Lower leg skin (tissue), 4 donors: ENCODE measurements at regions of chr1 and their contacts with region 1.

Region 1: DNA sequence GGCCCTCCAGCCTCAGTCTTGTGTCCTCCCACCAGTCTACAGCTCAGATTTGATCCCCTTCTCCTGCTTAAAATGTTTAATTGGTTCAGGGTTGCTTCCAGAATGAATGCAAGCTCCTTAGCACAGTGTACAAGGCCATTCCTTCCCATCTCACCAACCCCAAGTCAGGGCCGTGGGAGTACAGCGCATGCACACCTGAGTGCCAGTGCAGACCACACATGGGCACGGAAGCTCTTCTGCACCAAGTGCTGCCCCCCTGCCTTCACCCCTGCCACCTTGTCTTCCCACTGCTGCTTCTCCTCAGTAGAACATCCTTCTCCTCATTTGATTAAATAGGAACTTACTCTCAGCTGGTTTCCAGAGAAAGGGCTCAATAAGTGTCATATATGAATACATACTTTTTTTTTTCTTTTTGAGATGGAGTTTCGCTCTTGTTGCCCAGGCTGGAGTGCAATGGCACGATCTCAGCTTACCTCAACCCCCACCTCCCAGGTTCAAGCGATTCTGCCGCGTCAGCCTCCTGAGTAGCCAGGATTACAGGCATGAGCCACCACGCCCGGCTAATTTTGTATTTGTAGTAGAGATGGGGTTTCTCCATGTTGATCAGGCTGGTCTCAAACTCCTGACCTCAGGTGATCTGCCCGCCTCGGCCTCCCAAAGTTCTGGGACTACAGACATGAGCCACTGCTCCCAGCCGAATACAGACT is 9.3 kb downstream of the PMF1 start:
- DNase-seq: no peak
- H3K4me3 ChIP-seq: no peak overlapping the region
- CTCF ChIP-seq: no peak
- POLR2A ChIP-seq: no peak

Region 2: DNA sequence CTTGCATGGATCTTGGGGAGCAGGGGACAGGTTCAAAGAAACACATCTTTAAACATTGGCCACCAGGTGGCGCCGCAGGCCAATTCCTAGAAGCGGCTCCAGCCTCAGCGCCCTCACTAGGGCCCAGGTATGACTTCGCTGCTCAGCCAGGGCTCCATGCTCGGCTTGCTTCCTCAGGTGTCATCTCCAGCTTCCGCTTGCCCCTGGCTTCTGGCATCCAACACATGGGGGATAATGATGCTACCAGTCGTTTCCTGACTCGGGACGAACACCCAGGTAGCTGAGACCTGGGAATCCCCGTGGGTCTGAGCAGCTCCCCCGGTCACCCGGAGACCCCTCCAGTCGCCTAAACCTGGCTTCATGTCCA is 131.3 kb before region 1 on chr1:
- intact Hi-C with region 1: loop called (anchors 5 kb)
- DNase-seq: peak; percentile 71 to 97
- H3K4me3 ChIP-seq: no peak overlapping the region
- CTCF ChIP-seq: peak in 1 of 3 donors; percentile 59
- POLR2A ChIP-seq: no peak

Region 3: DNA sequence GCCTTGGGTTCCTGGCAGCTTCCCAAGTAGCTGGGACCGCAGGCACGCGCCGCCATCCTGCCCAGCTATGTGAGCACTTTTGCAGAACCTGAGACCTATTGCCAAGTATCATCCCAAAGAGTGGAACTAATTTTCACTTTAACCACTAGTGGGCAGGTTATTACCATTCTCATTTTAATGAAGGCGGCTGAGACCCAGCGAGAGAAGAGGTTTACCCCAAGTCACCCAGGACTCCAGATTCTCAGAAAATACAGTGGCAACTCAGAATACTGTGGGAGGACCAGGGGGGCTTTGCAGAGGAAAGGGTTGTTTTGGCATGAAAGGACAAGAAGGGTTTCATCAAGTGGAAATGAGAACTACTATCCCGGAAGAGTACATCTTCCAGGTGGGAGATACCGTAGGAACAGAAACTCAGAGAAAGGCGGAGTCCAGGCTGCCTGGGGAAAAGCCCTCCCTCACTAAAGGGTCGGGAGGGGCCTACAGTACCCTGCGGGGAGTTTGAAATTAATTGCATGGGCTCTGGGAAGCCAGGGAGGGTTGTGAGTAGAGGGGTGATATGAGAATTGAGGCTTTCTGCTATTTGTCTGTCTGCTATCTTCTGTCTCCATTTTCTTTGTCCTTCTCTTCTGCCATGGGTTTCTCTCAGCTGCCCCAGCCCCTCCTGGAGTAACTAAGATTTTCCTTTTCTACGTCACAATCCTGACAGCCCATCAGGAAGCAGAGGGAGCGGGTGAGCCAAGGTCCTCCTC is 75.9 kb before region 1 on chr1:
- intact Hi-C with region 1: loop called (anchors 5 kb)
- DNase-seq: peak; percentile 67 to 95
- H3K4me3 ChIP-seq: no peak overlapping the region
- CTCF ChIP-seq: no peak
- POLR2A ChIP-seq: no peak

Region 4: DNA sequence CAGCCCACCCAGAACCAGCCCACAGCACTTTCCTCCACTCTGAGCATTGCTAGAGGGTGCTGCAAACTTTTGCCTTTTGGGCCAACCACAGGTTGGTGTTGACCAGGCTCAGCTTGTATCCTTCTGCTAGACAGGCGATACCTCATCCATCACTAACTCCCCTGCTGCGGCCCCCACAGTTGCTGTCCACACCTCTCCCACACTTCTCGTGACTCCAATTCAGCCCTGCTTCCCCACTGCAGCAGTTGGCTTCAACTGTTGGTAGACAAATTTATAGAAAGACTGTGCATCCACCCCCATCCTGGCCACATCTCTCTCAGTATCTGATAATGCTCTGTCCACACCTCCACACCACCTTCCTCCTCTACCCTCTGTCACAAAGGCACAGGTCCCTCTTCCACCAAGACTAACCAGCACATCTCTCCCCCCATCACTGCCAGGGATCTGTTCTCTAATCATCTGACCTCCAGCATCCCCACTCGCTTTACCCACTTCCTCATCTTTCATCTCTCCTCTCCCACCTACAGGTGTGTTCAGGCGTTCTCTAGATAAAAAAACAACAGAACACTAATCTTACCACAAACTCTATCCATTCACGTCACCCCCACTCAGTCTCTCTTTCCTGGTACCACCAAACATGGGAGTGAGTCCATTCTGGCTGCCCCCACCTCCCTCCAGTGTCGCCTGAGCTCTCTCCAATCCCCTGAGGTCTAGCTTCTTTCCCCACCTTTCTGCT is 44.1 kb before region 1 on chr1:
- intact Hi-C with region 1: no loop called
- DNase-seq: no peak
- H3K4me3 ChIP-seq: no peak overlapping the region
- CTCF ChIP-seq: no peak
- POLR2A ChIP-seq: no peak

Region 5: DNA sequence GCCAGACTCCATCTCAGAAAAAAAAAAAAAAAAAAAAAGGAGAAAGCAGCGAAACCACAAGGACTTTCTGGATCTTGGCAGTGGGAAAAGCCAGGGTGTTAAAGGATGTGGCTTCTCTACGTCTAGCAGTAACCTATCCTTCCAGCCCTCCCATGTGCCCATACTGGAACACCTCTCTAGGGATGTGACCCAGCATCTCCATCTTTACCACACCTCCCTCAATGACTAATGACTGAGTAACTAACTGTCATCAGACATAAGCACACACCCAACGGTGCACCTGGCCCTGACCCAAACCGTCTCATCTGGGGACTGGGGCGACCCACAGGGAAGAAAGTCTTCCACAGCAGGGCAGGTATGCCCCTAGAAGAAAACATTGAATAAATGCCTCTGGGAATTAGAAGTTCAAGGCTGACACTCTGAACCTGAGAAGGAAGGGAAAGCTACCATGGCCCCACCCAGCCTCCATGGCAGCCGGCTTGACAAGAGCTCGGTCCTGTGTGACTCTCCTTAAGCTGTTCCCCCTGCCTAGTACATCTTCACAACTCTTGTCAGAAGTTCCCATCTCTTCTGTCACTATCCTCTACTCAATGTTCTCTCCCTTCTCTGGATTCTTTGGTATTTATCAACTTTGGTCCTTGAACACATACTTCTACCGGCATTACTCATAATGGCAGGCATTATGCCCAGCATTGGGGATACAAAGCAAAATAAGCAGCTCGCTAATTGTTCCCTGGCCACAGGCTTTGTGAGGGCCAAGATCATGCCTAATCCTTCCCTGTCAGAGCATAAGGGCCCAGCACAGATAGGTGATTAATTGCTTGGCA is 40.5 kb after region 1 on chr1:
- intact Hi-C with region 1: no loop called
- DNase-seq: no peak
- H3K4me3 ChIP-seq: no peak overlapping the region
- CTCF ChIP-seq: no peak
- POLR2A ChIP-seq: no peak

Region 6: GRCh38 chr1:156659994-156660751 is 438.0 kb after region 1 on chr1:
- intact Hi-C with region 1: no loop called
- DNase-seq: peak; percentile 89 to 99
- H3K4me3 ChIP-seq: no peak overlapping the region
- CTCF ChIP-seq: peak in 2 of 3 donors; percentile 68 to 93
- POLR2A ChIP-seq: no peak